ENCODE measurements at regions of chr13 and their contacts with region 1.

Region 1: DNA sequence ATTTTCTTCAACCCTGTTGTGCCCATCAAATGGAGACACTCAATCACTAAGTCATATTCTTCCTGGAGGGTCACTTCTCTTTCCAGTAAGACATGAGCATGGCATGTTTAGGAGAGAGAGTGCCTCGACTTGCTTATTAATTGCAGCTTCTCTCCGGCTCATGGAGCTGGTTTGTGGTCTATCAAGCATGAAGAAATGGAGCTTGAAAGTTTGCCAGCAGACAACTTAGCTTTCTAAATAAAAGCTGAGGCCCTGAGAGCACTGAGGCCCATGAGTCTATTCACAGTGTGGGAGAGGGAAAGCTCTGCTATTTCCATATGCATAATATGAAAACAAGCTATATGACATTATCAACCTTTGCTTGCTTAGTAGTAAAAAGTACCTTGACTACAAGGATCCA is 378.5 kb downstream of the FGF9 start:
- DNase-seq: no peak
- H3K4me3 ChIP-seq: no peak overlapping the region
- H3K4me3 Mint-ChIP-seq: no peak overlapping the region
- H3K27ac ChIP-seq: no peak overlapping the region
- H3K27ac Mint-ChIP-seq: peak overlapping the region in 1 of 8 donors; percentile 74
- H3K4me1 ChIP-seq: peaks cover 10% of the 10 kb centered on the region
- H3K4me1 Mint-ChIP-seq: peaks cover 26 to 56% (median 39%) of the 10 kb centered on the region in 3 donors
- H3K27me3 ChIP-seq: no peaks in the 10 kb centered on the region
- H3K27me3 Mint-ChIP-seq: peaks cover 0 to 3% of the 10 kb centered on the region in 2 donors

Region 2: DNA sequence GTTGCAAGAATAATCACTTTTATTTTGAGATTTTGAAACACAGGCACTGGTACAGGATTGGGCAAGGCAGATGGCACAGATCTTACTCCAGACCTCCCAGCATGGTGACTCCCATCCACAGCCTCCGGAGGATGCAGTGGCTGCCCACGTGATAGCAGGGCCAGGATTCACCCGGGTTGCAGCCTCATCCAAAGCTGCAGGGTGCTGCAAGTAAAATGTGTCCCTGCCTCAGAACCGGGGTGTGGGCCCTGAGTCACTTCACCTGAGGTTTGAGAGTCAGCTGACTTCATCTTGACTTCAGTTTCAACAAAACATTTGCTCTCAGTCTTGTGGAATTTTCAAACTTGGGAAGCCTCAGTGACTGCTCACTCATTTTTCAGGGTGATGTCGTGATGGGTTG is 176.6 kb before region 1 on chr13:
- CTCF ChIA-PET with region 1: no interaction called
- POLR2A ChIA-PET with region 1: no interaction called
- DNase-seq: no peak
- H3K4me3 ChIP-seq: no peak overlapping the region
- H3K4me3 Mint-ChIP-seq: no peak overlapping the region
- H3K27ac ChIP-seq: no peak overlapping the region
- H3K27ac Mint-ChIP-seq: no peak overlapping the region
- H3K4me1 ChIP-seq: no peaks in the 10 kb centered on the region
- H3K4me1 Mint-ChIP-seq: no peaks in the 10 kb centered on the region
- H3K27me3 ChIP-seq: no peaks in the 10 kb centered on the region
- H3K27me3 Mint-ChIP-seq: peaks cover 0 to 11% of the 10 kb centered on the region in 2 donors

Region 3: GRCh38 chr13:22061351-22061805 is 12.0 kb after region 1 on chr13:
- CTCF ChIA-PET with region 1: interaction called, 15 read pairs
- POLR2A ChIA-PET with region 1: interaction called, 3 read pairs
- DNase-seq: peak in 4 of 5 donors; percentile 37 to 82 (median 58)
- H3K4me3 ChIP-seq: no peak overlapping the region
- H3K4me3 Mint-ChIP-seq: peak overlapping the region; percentile 31 to 83 (median 52)
- H3K27ac ChIP-seq: peak overlapping the region; percentile 83
- H3K27ac Mint-ChIP-seq: peak overlapping the region; percentile 93 to 99 (median 98)
- H3K4me1 ChIP-seq: peaks cover 69% of the 10 kb centered on the region
- H3K4me1 Mint-ChIP-seq: peaks cover 84 to 95% (median 93%) of the 10 kb centered on the region in 3 donors
- H3K27me3 ChIP-seq: no peaks in the 10 kb centered on the region
- H3K27me3 Mint-ChIP-seq: no peaks in the 10 kb centered on the region